Activated naive CD4-positive, alpha-beta T cell treated with anti-CD3 and anti-CD28 coated beads for 36 hours (primary cell): ENCODE measurements at regions of chr3 and their contacts with region 1.

Region 1: DNA sequence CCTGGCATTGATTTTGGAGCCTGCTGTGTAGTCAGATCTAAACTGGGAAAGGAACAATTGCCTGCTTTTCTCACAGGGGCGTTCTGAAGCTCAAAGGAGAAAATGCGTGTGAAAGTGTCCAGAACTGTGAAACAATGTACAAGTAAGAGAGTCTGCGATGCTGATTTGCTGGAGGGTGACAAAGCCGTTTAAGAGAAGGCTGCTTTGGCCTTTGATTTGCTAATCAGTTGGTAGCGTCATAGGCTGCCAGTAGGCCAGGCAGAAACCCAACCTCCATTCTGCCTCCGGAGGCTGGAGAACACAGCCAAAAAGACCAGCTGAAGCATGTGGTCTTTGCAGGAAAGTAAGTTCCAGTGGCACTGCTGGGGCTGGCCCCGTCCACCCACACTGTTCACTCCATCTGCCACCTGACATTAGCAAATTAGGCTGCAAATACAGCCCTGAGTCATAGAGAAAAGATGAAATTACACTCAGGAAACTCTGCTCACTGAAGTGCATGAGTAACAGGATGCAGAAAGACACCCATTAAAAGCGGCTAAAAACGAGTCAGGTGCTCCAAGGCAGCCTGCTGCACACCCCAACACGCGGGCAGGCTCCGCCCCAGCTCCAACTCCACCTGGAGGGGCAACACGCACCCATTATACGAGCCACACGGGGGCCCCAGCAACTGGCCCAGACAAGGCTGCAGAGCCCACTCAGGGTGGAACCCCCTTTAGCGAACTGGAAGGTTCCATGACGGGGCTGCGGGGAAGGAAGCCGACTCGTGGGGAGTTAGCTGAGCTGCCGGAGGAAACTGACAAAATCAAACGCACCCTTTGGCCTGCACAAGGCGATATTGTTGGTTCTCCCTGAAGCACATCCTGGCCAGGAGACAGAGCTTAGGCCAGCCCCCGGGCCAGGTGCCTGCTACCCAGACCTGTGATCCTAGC is 31.6 kb downstream of the ZDHHC19 start:
- DNase-seq: peak; percentile 95
- H3K4me3 Mint-ChIP-seq: peak overlapping the region; percentile 66
- H3K27ac Mint-ChIP-seq: peak overlapping the region; percentile 99
- H3K4me1 Mint-ChIP-seq: peaks cover 54% of the 10 kb centered on the region
- H3K27me3 Mint-ChIP-seq: no peaks in the 10 kb centered on the region

Region 2: DNA sequence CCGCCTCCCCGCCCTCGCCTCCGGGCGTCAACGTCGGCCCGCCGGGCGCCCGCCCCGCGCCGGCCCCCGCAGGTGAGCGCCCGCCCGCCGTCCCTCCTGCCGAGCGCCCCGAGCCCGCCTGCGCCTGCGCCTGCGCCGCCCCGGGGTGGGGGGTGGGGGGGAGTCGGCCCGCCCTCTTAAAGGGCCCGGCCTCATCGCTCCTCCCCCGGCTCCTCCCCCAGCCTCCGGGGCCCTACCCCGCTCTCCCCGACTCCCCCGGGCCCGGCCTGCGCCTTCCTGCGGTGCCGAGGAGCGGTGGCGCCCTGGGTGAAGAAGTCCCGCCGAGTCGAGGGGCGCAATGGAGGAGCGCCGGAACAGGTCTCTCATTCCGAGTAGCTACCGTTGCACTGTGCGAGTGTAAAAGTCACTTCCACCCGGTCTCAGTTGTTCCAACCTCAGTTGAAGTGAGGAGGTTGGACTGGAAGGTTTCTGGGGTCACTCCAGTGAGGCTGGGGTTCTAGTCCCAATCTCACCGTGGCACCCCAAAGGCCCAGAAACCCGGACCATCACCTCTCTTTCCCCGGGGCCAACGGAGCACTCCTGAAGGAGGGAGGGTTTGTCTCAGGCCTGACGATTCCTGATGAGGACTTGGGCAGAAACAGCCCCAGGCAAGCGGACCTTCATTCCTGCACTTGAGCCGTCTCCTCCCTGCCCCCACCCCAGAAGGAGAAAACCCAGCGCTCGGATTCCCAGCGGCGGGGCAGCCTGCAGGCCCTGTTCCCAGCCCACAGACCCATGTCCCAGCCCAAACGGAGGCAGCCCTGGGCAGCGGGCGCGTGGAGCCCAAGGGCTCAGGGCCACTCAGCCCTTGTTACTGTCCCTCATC is 269.8 kb before region 1 on chr3:
- CTCF ChIA-PET with region 1: no interaction called
- intact Hi-C with region 1: loop called (anchors 1 kb)
- DNase-seq: peak; percentile 89
- H3K4me3 Mint-ChIP-seq: peak overlapping the region; percentile 70
- H3K27ac Mint-ChIP-seq: no peak overlapping the region
- H3K4me1 Mint-ChIP-seq: peaks cover 33% of the 10 kb centered on the region
- H3K27me3 Mint-ChIP-seq: no peaks in the 10 kb centered on the region

Region 3: DNA sequence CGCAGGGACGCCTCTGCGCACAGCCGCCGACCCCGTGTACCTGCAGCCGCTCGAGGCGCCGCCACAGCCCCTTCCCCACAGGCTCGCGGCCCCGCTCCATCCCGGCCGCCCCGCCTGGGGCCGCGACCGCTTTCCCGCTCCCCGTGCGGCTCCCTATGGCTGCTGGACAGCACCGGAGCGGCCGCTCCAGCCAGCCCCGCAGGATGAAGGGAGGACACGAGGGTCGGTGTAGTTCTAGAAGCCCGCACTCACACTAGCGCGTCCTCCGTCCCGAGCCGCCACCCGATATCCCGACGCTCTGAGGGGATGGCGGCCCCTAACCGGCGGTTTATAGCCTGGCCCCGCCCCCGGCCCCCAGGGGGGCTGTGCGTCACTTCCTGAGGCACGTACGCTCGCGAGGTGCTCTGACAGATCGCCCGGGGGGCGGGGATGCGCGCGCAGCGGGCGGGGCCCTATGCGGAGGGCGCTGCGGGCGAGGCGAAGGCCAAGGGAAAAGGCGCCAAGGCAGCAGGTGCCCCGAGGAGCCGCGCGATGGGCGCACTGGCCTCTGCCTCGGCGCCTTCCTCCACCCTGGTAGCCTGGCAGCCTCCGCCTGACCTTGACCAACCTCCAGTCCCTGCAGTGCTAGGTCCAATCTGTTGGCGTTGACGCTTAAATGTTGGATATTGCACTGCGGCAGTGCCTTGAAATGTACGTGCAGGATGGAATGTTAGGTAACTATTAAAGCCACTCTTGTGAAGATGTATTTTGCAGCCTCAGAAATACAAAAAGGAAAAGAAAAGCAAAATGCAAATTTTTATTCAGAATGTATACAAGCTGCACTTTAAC is 97.6 kb before region 1 on chr3 and contains the start of gene TFRC:
- CTCF ChIA-PET with region 1: interaction called, 3 read pairs
- intact Hi-C with region 1: loop called (anchors 1 kb)
- DNase-seq: peak; percentile 96
- H3K4me3 Mint-ChIP-seq: peak within 1 kb of the TSS; percentile 97
- H3K27ac Mint-ChIP-seq: peak within 1 kb of the TSS; percentile 93
- H3K4me1 Mint-ChIP-seq: peaks cover 36% of the 10 kb centered on the region
- H3K27me3 Mint-ChIP-seq: no peaks in the 10 kb centered on the region
- total RNA-seq, gene TFRC: 436 to 442 TPM

Region 4: DNA sequence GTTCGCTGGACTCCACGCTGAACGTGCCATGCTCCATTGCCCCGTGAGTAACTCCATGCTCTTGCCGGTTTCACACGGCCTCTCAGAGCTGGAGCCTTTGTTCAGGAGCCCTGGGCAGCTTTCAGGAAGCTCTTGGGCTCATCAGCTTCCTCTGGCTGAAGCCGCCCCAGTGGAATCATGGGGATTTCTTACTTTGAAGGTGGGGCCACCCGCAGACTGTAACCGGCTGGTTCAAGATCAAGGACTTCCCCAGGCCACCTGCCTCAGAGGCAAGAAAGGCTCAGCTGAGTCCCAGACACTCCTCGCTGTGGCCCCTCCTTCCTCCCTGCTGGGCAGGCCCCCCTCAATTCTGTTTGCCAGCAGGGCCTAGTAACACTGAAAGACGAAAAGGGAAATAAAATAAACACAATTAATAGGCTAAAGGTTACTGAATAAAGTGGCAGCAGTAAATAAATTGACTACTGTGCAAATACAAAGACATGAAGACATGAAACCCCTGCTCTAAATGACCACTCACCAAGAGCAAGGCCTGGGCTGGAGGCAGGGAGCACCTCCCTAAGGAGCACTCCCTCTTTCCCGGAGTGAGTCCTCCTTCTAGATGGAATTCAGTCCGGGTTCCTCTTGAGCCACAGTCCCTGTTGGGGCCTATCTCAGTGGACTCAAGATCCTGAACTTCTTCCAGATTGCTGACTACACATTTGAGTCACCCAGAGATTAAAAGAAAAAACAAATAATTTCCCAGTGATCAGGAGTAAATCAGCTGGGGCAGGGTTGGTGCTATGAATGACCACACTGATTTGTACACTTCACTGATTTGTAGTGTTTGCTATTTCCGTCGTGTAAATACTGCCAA is 19.5 kb before region 1 on chr3:
- CTCF ChIA-PET with region 1: interaction called, 3 read pairs
- intact Hi-C with region 1: loop called (anchors 1 kb)
- DNase-seq: peak; percentile 79
- H3K4me3 Mint-ChIP-seq: no peak overlapping the region
- H3K27ac Mint-ChIP-seq: no peak overlapping the region
- H3K4me1 Mint-ChIP-seq: peaks cover 11% of the 10 kb centered on the region
- H3K27me3 Mint-ChIP-seq: no peaks in the 10 kb centered on the region

Region 5: GRCh38 chr3:196192036-196192523 is 12.4 kb after region 1 on chr3:
- CTCF ChIA-PET with region 1: interaction called, 14 read pairs
- intact Hi-C with region 1: loop called (anchors 1 kb)
- DNase-seq: peak; percentile 82
- H3K4me3 Mint-ChIP-seq: peak overlapping the region; percentile 55
- H3K27ac Mint-ChIP-seq: peak overlapping the region; percentile 92
- H3K4me1 Mint-ChIP-seq: peaks cover 38% of the 10 kb centered on the region
- H3K27me3 Mint-ChIP-seq: no peaks in the 10 kb centered on the region

Region 6: GRCh38 chr3:196207833-196208607 is 28.4 kb after region 1 on chr3:
- CTCF ChIA-PET with region 1: no interaction called
- intact Hi-C with region 1: no loop called
- DNase-seq: peak; percentile 80
- H3K4me3 Mint-ChIP-seq: peak overlapping the region; percentile 73
- H3K27ac Mint-ChIP-seq: no peak overlapping the region
- H3K4me1 Mint-ChIP-seq: peaks cover 15% of the 10 kb centered on the region
- H3K27me3 Mint-ChIP-seq: peaks cover 3% of the 10 kb centered on the region

Region 7: DNA sequence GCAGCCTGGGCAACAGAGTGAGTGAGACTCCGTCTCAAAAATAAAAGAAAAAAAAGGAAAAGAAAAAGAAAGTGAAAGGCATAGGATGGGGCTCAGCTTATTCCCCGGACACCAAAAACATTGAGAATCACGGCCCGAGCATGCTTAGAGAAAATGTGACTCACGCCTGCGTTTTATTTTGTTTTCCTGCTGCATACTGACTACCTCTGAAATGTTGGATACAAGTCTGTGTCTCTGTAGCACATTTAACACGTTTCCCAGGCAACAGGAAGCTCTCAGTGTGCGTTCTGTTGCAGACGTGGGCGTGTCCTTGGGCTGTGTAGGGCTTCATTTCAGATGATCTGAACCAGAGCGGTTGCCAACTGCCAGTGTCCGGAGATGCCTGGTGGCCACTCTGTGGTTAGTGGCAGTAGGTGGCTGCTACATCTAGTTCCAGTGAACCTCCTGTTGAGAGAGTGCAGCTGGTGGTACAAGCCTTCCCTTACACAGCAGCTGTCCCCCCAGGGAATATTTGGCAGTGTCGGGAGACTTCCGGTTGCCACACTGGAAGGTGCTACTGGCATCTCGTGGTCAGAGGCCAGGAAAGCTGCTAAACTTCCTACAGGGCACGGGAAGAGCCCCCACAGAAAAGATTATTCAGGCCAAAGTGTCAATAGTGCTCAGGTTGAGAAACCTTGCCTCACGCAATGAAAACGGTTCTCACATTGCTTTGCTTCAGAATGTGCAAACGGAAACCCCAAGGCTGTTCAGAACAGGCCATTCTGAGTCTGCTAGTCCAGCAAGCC is 39.7 kb after region 1 on chr3:
- CTCF ChIA-PET with region 1: no interaction called
- intact Hi-C with region 1: loop called (anchors 1 kb)
- DNase-seq: peak; percentile 89
- H3K4me3 Mint-ChIP-seq: peak overlapping the region; percentile 66
- H3K27ac Mint-ChIP-seq: peak overlapping the region; percentile 84
- H3K4me1 Mint-ChIP-seq: peaks cover 26% of the 10 kb centered on the region
- H3K27me3 Mint-ChIP-seq: no peaks in the 10 kb centered on the region